Ovary (tissue), 10 donors: ENCODE measurements at regions of chr1 and their contacts with region 1.

Region 1: GRCh38 chr1:219503604-219504003 is 109.3 kb downstream of the ZC3H11B start:
- DNase-seq: no peak
- H3K4me3 ChIP-seq: no peak overlapping the region
- H3K27ac ChIP-seq: no peak overlapping the region
- H3K4me1 ChIP-seq: no peaks in the 10 kb centered on the region
- H3K27me3 ChIP-seq: no peaks in the 10 kb centered on the region
- CTCF ChIP-seq: no peak
- EP300 ChIP-seq: no peak
- POLR2A ChIP-seq: no peak

Region 2: GRCh38 chr1:219442611-219443061 is 61.0 kb before region 1 on chr1:
- intact Hi-C with region 1: no loop called
- DNase-seq: no peak
- H3K4me3 ChIP-seq: no peak overlapping the region
- H3K27ac ChIP-seq: no peak overlapping the region
- H3K4me1 ChIP-seq: peaks cover 2% of the 10 kb centered on the region
- H3K27me3 ChIP-seq: no peaks in the 10 kb centered on the region
- CTCF ChIP-seq: no peak
- EP300 ChIP-seq: no peak
- POLR2A ChIP-seq: no peak

Region 3: GRCh38 chr1:219542828-219543518 is 39.4 kb after region 1 on chr1:
- intact Hi-C with region 1: loop called in 1 of 4 experiments (anchors 1 kb)
- DNase-seq: no peak
- H3K4me3 ChIP-seq: no peak overlapping the region
- H3K27ac ChIP-seq: no peak overlapping the region
- H3K4me1 ChIP-seq: no peaks in the 10 kb centered on the region
- H3K27me3 ChIP-seq: no peaks in the 10 kb centered on the region
- CTCF ChIP-seq: no peak
- EP300 ChIP-seq: no peak
- POLR2A ChIP-seq: no peak

Region 4: GRCh38 chr1:219699870-219700269 is 196.3 kb after region 1 on chr1:
- intact Hi-C with region 1: no loop called
- DNase-seq: peak in 3 of 5 donors; percentile 22 to 42 (median 35)
- H3K4me3 ChIP-seq: no peak overlapping the region
- H3K27ac ChIP-seq: no peak overlapping the region
- H3K4me1 ChIP-seq: peaks cover 6% of the 10 kb centered on the region
- H3K27me3 ChIP-seq: no peaks in the 10 kb centered on the region
- CTCF ChIP-seq: no peak
- EP300 ChIP-seq: no peak
- POLR2A ChIP-seq: no peak